ENCODE measurements at regions of chr5 and their contacts with region 1.

Region 1: DNA sequence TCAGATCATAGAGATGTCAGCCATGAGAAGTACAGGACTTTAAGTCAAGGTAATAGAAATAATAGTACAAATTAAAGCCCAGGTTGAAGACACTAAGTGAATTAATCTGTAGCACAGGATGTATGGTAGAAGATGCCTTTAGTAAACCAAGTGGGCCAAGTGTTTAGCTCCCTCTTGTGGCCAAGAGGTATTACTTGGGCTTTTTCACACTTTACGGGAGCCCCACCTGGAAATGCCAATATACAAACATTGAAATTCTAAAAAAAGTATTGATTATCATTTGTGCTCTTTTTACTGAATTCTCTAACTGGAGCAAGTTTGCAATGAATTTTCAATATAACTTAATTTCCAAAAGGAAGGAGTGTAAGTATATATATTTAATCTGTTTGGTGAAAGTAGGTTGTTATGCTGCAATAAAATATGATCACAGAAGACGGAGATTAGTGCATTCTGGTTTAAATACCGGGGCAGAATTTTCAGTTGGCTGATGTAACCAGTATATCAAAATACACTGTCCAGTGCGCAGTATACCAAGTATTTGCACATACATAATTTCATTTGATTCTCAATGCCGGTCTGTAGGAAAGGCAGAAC is 84.7 kb downstream of the PARP8 start:
- DNase-seq: peak; percentile 15
- H3K4me3 ChIP-seq: no peak overlapping the region
- H3K27ac ChIP-seq: no peak overlapping the region
- H3K27me3 ChIP-seq: no peaks in the 10 kb centered on the region
- CTCF ChIP-seq: peak; percentile 90

Region 2: GRCh38 chr5:50704730-50705129 is 46.4 kb before region 1 on chr5:
- CTCF ChIA-PET with region 1: no interaction called
- POLR2A ChIA-PET with region 1: no interaction called
- DNase-seq: no peak
- H3K4me3 ChIP-seq: no peak overlapping the region
- H3K27ac ChIP-seq: no peak overlapping the region
- H3K27me3 ChIP-seq: no peaks in the 10 kb centered on the region
- CTCF ChIP-seq: no peak

Region 3: GRCh38 chr5:50733741-50734140 is 17.4 kb before region 1 on chr5:
- CTCF ChIA-PET with region 1: interaction called, 28 read pairs
- POLR2A ChIA-PET with region 1: no interaction called
- DNase-seq: no peak
- H3K4me3 ChIP-seq: no peak overlapping the region
- H3K27ac ChIP-seq: no peak overlapping the region
- H3K27me3 ChIP-seq: no peaks in the 10 kb centered on the region
- CTCF ChIP-seq: no peak

Region 4: GRCh38 chr5:50738864-50739263 is 12.3 kb before region 1 on chr5:
- CTCF ChIA-PET with region 1: interaction called, 28 read pairs
- POLR2A ChIA-PET with region 1: no interaction called
- DNase-seq: no peak
- H3K4me3 ChIP-seq: no peak overlapping the region
- H3K27ac ChIP-seq: no peak overlapping the region
- H3K27me3 ChIP-seq: no peaks in the 10 kb centered on the region
- CTCF ChIP-seq: no peak

Region 5: GRCh38 chr5:50767588-50767987 is 16.4 kb after region 1 on chr5:
- CTCF ChIA-PET with region 1: interaction called, 40 read pairs
- POLR2A ChIA-PET with region 1: no interaction called
- DNase-seq: peak; percentile 10
- H3K4me3 ChIP-seq: no peak overlapping the region
- H3K27ac ChIP-seq: no peak overlapping the region
- H3K27me3 ChIP-seq: no peaks in the 10 kb centered on the region
- CTCF ChIP-seq: no peak

Region 6: DNA sequence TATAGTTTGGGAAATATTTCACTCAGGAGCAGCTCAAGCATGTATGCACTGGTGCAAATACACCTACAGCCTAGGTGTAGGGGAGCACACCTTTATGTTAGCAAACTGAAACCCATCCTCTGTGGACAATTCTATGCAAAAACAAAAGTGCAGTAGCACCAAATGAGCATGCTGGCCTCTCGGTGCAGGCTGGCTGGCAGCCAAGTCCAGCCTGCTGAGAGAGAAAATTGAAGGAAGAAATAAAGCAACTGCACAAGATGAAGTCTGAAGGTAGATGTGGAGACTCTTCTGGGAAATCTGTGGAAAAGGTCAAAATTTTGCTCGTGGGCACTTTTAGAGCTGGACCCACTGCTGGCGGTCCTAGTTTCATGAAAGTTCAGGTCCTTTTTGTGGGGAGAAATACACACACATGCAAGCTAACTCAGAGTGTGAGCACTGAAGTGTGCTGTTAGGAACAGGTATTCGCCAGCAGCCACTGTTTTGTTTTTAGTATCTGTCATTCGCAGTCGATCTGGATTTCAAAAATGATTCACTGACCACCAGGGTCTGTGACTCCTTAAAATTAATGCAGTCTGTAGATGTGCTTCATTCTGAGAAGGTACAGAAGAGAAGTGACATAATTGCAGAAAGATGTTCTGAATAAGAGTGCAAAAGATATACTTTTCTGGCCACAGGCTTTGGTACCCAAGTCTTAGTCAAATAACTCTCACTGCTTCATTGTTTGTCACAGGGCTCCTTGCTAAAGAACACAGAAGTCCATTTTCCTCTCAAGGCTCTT is 196.9 kb after region 1 on chr5:
- CTCF ChIA-PET with region 1: no interaction called
- POLR2A ChIA-PET with region 1: no interaction called
- DNase-seq: no peak
- H3K4me3 ChIP-seq: no peak overlapping the region
- H3K27ac ChIP-seq: no peak overlapping the region
- H3K27me3 ChIP-seq: no peaks in the 10 kb centered on the region
- CTCF ChIP-seq: no peak

Measured in AG04450 (cell line).